ENCODE measurements at regions of chr7 and their contacts with region 1.

Region 1: GRCh38 chr7:138752568-138753518 is 45.0 kb upstream of the TMEM213 start:
- DNase-seq: peak; percentile 66 to 99 (median 96)
- ATAC-seq: peak; percentile 95
- H3K4me3 ChIP-seq: no peak overlapping the region
- H3K4me3 Mint-ChIP-seq: peak overlapping the region; percentile 61 to 81 (median 72)
- H3K27ac ChIP-seq: peak overlapping the region; percentile 60
- H3K27ac Mint-ChIP-seq: peak overlapping the region; percentile 89 to 99 (median 96)
- H3K4me1 ChIP-seq: peaks cover 22 to 25% of the 10 kb centered on the region in 2 donors
- H3K4me1 Mint-ChIP-seq: peaks cover 34 to 78% (median 61%) of the 10 kb centered on the region in 7 donors
- H3K27me3 ChIP-seq: no peaks in the 10 kb centered on the region
- H3K27me3 Mint-ChIP-seq: peaks cover 0 to 4% (median 0%) of the 10 kb centered on the region in 5 donors

Region 2: DNA sequence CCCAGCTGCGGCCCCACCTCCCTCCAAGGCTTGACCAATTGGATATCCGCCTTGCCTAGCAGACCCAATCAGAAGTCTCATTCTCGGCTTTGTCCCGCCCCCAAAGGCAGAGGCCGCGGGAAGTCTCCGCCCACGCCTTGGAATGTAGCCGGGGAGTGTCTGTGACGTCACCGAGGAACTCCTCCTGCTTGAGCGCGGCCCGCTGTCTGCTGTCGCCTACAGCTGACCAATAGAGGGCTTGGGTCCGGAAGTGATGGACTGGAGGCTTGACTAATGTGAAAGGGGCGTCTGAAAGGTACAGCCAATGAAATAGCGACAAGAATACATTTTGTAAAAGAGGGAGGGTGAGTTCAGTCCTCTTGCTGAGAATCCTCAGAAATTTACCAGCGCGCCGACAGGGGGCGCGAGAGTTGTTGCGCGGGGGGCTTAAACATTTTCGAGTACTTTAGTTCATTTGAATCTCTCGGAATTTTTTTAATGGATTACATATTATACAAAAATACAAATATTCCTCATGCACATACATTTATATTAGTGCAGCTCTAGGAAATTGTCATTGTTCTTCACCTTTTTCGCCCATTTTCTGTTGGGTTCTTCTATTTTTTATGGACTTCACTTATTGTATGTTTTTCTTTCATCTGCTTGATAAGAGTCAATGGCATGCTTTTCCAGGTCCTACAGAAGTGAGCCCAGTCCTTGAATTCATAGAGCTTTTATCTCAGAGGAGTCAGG is 750.6 kb before region 1 on chr7:
- CTCF ChIA-PET with region 1: no interaction called
- POLR2A ChIA-PET with region 1: no interaction called
- intact Hi-C with region 1: loop called (anchors 1 to 5 kb)
- DNase-seq: peak; percentile 95 to 98 (median 97)
- ATAC-seq: peak; percentile 95
- H3K4me3 ChIP-seq: peak overlapping the region; percentile 99
- H3K4me3 Mint-ChIP-seq: peak overlapping the region; percentile 89 to 96 (median 94)
- H3K27ac ChIP-seq: peak overlapping the region; percentile 79
- H3K27ac Mint-ChIP-seq: peak overlapping the region; percentile 67 to 95 (median 89)
- H3K4me1 ChIP-seq: peaks cover 6 to 14% of the 10 kb centered on the region in 2 donors
- H3K4me1 Mint-ChIP-seq: peaks cover 9 to 54% (median 45%) of the 10 kb centered on the region in 7 donors
- H3K27me3 ChIP-seq: no peaks in the 10 kb centered on the region
- H3K27me3 Mint-ChIP-seq: no peaks in the 10 kb centered on the region

Region 3: DNA sequence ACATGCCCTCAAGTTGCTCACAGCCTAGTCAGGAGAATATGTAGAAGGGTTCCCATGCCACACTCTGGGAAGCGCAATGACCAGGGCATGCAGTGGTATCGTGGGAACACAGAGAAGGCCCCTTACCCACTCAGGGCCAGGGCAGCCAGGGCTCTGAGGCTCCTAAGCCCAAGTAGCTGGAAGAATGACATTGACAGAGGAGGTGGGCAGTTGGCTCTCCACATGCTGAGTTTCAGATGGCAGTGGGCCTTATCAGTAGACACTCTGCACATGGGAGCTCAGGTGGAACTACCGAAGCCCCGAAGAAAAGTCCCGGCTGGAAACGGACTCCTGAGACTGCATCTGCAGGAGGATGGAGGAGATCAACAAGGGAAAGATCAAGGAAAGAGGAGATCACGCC is 36.0 kb before region 1 on chr7:
- CTCF ChIA-PET with region 1: no interaction called
- POLR2A ChIA-PET with region 1: no interaction called
- intact Hi-C with region 1: loop called in 1 of 2 experiments (anchors 2 kb)
- DNase-seq: no peak
- ATAC-seq: no peak
- H3K4me3 ChIP-seq: no peak overlapping the region
- H3K4me3 Mint-ChIP-seq: peak overlapping the region; percentile 31 to 96 (median 78)
- H3K27ac ChIP-seq: no peak overlapping the region
- H3K27ac Mint-ChIP-seq: peak overlapping the region in 6 of 9 donors; percentile 60 to 91 (median 80)
- H3K4me1 ChIP-seq: no peaks in the 10 kb centered on the region
- H3K4me1 Mint-ChIP-seq: peaks cover 12 to 32% (median 23%) of the 10 kb centered on the region in 7 donors
- H3K27me3 ChIP-seq: no peaks in the 10 kb centered on the region
- H3K27me3 Mint-ChIP-seq: peaks cover 0 to 29% (median 0%) of the 10 kb centered on the region in 5 donors

Region 4: GRCh38 chr7:138875794-138876193 is 123.0 kb after region 1 on chr7:
- CTCF ChIA-PET with region 1: no interaction called
- POLR2A ChIA-PET with region 1: no interaction called
- intact Hi-C with region 1: loop called (anchors 1 to 2 kb)
- DNase-seq: peak in 8 of 9 donors; percentile 59 to 77 (median 67)
- ATAC-seq: peak; percentile 98
- H3K4me3 ChIP-seq: no peak overlapping the region
- H3K4me3 Mint-ChIP-seq: peak overlapping the region in 2 of 10 donors; percentile 20 to 29
- H3K27ac ChIP-seq: no peak overlapping the region
- H3K27ac Mint-ChIP-seq: peak overlapping the region in 8 of 9 donors; percentile 16 to 61 (median 48)
- H3K4me1 ChIP-seq: no peaks in the 10 kb centered on the region
- H3K4me1 Mint-ChIP-seq: peaks cover 9 to 23% (median 12%) of the 10 kb centered on the region in 7 donors
- H3K27me3 ChIP-seq: no peaks in the 10 kb centered on the region
- H3K27me3 Mint-ChIP-seq: peaks cover 0 to 9% (median 0%) of the 10 kb centered on the region in 5 donors

Region 5: GRCh38 chr7:138981332-138982203 is 228.7 kb after region 1 on chr7 and contains the start of gene KIAA1549:
- CTCF ChIA-PET with region 1: no interaction called
- POLR2A ChIA-PET with region 1: no interaction called
- intact Hi-C with region 1: loop called in 1 of 2 experiments (anchors 2 kb)
- DNase-seq: peak in 8 of 9 donors; percentile 17 to 75 (median 26)
- ATAC-seq: peak; percentile 81
- H3K4me3 ChIP-seq: peak within 1 kb of the TSS; percentile 37
- H3K4me3 Mint-ChIP-seq: peak within 1 kb of the TSS; percentile 83 to 98 (median 90)
- H3K27ac ChIP-seq: no peak within 1 kb of the TSS
- H3K27ac Mint-ChIP-seq: peak within 1 kb of the TSS in 7 of 9 donors; percentile 12 to 82 (median 63)
- H3K4me1 ChIP-seq: peaks cover 5 to 6% of the 10 kb centered on the region in 2 donors
- H3K4me1 Mint-ChIP-seq: peaks cover 10 to 18% (median 13%) of the 10 kb centered on the region in 7 donors
- H3K27me3 ChIP-seq: peaks cover 10 to 13% of the 10 kb centered on the region in 2 donors
- H3K27me3 Mint-ChIP-seq: peaks cover 25 to 49% (median 35%) of the 10 kb centered on the region in 5 donors
- total RNA-seq, gene KIAA1549: 0.16 to 0.56 (median 0.25) TPM in 4 of 5 experiments, not detected in the other

Region 6: GRCh38 chr7:139133335-139134139 is 380.7 kb after region 1 on chr7:
- CTCF ChIA-PET with region 1: no interaction called
- POLR2A ChIA-PET with region 1: no interaction called
- intact Hi-C with region 1: loop called (anchors 1 to 10 kb)
- DNase-seq: peak; percentile 68 to 86 (median 83)
- ATAC-seq: peak; percentile 98
- H3K4me3 ChIP-seq: peak overlapping the region; percentile 86
- H3K4me3 Mint-ChIP-seq: peak overlapping the region; percentile 85 to 96 (median 90)
- H3K27ac ChIP-seq: peak overlapping the region; percentile 72
- H3K27ac Mint-ChIP-seq: peak overlapping the region; percentile 76 to 95 (median 85)
- H3K4me1 ChIP-seq: peaks cover 0 to 10% of the 10 kb centered on the region in 2 donors
- H3K4me1 Mint-ChIP-seq: peaks cover 11 to 33% (median 16%) of the 10 kb centered on the region in 7 donors
- H3K27me3 ChIP-seq: no peaks in the 10 kb centered on the region
- H3K27me3 Mint-ChIP-seq: peaks cover 0 to 5% (median 0%) of the 10 kb centered on the region in 5 donors

Measured in naive thymus-derived CD4-positive, alpha-beta T cell (primary cell).